A673 (cell line): ENCODE measurements at regions of chr10 and their contacts with region 1.

Region 1: GRCh38 chr10:130547368-130547767 is 411.2 kb downstream of the GLRX3 start:
- DNase-seq: peak; percentile 42
- H3K4me3 ChIP-seq: no peak overlapping the region
- H3K27ac ChIP-seq: no peak overlapping the region
- H3K4me1 ChIP-seq: peaks cover 13% of the 10 kb centered on the region
- H3K27me3 ChIP-seq: no peaks in the 10 kb centered on the region
- CTCF ChIP-seq: peak; percentile 46

Region 2: DNA sequence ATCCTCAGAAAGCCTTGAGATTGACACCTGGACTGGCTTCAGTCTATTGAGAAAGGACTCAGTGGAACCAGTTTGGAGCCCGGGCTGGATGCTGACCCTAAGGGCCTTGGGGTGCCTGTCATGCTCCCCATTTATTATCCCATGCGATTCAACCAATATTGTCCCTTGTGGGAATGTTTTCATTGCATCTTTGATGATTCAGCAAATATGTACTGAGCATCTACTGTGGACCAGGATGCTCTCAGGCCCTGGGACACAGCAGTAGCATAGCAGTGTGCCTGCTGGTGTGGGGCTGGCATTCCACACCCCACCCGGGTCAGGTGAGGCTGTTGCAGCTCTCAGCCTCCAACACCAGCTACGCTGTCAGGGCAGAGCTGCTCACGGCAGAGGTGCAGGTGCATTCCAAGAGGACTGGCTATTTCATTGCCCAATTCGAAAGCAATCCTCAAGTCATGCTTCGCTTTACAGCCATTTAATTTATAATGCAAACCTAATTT is 178.2 kb after region 1 on chr10:
- CTCF ChIA-PET with region 1: interaction called, 14 read pairs
- POLR2A ChIA-PET with region 1: no interaction called
- intact Hi-C with region 1: no loop called
- DNase-seq: no peak
- H3K4me3 ChIP-seq: no peak overlapping the region
- H3K27ac ChIP-seq: no peak overlapping the region
- H3K4me1 ChIP-seq: no peaks in the 10 kb centered on the region
- H3K27me3 ChIP-seq: no peaks in the 10 kb centered on the region
- CTCF ChIP-seq: no peak